Body of pancreas (tissue), 4 donors: ENCODE measurements at regions of chr1 and their contacts with region 1.

Region 1: DNA sequence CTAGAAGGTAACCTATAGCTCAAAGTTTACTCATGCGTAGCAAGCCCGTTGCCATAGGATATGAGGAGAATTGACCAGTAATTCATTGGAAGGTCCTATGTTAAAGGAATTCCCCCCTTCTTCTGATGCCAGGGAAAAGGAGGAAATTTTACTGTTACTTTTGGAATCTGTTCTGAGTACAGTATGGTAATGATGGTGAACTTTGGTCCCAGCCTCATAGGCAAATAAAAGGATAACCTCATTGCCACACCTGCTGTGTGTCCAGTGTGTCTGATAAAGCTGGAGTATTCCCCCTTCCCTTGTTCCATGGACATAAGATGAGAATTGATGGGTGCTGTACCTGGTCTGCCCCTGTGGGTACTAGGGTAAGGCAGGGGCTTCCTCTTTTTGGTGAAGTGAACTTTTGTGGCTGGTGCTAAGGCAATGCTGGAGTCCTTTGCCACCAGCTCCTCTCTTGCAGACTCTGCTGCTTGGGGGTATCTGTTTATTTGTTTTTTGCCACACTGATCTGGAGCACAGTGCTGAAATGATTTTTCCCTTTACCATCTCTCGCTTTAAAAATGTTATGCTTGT is 22.2 kb downstream of the MPZ start:
- DNase-seq: no peak
- ATAC-seq: no peak
- H3K4me3 ChIP-seq: no peak overlapping the region
- H3K27ac ChIP-seq: no peak overlapping the region
- H3K4me1 ChIP-seq: no peaks in the 10 kb centered on the region
- H3K27me3 ChIP-seq: no peaks in the 10 kb centered on the region
- CTCF ChIP-seq: no peak
- POLR2A ChIP-seq: no peak

Region 2: DNA sequence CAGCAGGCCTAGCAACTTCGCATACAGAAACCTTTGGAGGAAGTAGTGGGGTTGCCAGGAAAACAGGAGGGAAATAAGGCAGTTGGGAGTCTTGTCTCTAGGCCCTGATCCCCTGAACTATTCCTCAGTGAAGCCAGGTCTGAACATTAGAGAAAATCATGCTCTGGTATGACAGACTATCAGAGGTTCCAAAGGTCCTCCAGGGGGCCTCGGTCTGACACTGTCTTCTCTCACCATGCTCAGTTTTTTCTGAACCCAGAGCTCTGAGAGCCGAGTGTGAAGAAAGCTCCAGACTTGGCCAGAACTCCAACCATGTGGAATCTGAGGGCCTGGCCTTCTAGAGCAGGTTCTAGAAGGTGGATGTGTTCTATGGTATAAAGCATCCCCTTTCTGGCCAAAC is 57.7 kb before region 1 on chr1:
- intact Hi-C with region 1: loop called (anchors 10 kb)
- DNase-seq: no peak
- ATAC-seq: no peak
- H3K4me3 ChIP-seq: no peak overlapping the region
- H3K27ac ChIP-seq: no peak overlapping the region
- H3K4me1 ChIP-seq: peaks cover 24% of the 10 kb centered on the region
- H3K27me3 ChIP-seq: no peaks in the 10 kb centered on the region
- CTCF ChIP-seq: no peak
- POLR2A ChIP-seq: no peak

Region 3: DNA sequence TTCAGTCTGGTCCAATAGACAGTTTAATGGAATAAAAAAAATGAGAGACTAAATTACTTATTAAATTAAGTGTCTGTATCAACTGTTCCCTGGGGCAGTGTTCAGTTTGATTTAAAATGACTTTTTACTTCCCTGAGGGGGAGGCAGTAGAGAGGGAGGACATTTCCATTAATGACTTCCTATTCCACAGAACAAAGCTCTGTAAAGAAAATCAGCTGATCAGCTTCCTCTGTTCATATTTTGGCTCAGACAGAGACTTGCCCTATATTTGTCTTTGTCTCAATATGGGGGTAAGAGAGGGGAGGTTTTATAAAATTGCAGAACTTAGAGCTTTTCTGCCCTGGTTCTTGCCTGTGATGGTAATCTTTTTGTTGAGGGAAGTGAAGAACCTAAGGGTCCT is 71.7 kb after region 1 on chr1:
- intact Hi-C with region 1: no loop called
- DNase-seq: no peak
- ATAC-seq: no peak
- H3K4me3 ChIP-seq: no peak overlapping the region
- H3K27ac ChIP-seq: peak overlapping the region in 1 of 4 donors; percentile 24
- H3K4me1 ChIP-seq: peaks cover 9% of the 10 kb centered on the region
- H3K27me3 ChIP-seq: no peaks in the 10 kb centered on the region
- CTCF ChIP-seq: no peak
- POLR2A ChIP-seq: no peak

Region 4: DNA sequence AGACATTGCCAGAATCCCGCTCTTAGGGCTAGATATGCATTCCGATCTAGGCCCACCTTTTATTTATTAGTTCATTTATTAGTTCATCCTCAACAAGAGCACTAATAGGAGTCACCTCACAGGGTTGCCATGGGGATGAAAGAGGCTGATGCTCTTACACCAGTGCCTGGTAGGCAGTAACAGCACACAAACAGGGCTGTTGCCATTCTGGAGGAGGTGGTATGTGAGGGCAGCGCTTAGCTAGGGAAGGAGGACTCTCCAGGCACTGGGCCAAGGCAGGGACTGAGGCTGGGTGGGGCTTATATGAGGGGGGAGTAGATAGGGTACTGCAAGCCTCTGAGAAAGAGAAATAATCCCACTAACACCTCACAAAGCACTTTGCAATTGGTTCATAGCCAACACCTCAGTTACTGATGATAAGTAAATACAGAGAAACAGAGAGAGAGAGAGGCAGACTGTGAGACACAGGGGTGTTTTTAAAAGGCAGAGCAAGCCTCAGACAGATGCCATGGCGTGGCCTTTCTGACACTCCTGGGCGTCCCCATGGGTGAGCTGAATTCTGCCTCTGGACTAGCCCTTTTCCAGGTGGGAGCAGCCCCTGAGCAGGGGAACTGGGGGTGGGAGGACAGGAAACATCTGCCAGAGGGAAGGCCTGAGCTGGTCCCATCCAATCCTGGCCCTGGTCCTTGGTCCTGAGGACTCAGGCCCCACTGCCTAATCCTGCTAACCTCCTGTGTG is 223.6 kb after region 1 on chr1:
- intact Hi-C with region 1: no loop called
- DNase-seq: no peak
- ATAC-seq: no peak
- H3K4me3 ChIP-seq: no peak overlapping the region
- H3K27ac ChIP-seq: no peak overlapping the region
- H3K4me1 ChIP-seq: peaks cover 18% of the 10 kb centered on the region
- H3K27me3 ChIP-seq: no peaks in the 10 kb centered on the region
- CTCF ChIP-seq: no peak
- POLR2A ChIP-seq: no peak